ENCODE measurements at regions of chr4 and their contacts with region 1.

Region 1: GRCh38 chr4:88964450-88964849 is 92.5 kb downstream of the FAM13A start:
- DNase-seq: no peak
- ATAC-seq: peak; percentile 24
- H3K4me3 ChIP-seq: no peak overlapping the region
- H3K4me3 Mint-ChIP-seq: no peak overlapping the region
- H3K27ac ChIP-seq: no peak overlapping the region
- H3K27ac Mint-ChIP-seq: no peak overlapping the region
- H3K4me1 ChIP-seq: peaks cover 0 to 8% of the 10 kb centered on the region in 2 donors
- H3K4me1 Mint-ChIP-seq: peaks cover 0 to 25% (median 16%) of the 10 kb centered on the region in 7 donors
- H3K27me3 ChIP-seq: no peaks in the 10 kb centered on the region
- H3K27me3 Mint-ChIP-seq: peaks cover 0 to 11% (median 0%) of the 10 kb centered on the region in 5 donors

Region 2: DNA sequence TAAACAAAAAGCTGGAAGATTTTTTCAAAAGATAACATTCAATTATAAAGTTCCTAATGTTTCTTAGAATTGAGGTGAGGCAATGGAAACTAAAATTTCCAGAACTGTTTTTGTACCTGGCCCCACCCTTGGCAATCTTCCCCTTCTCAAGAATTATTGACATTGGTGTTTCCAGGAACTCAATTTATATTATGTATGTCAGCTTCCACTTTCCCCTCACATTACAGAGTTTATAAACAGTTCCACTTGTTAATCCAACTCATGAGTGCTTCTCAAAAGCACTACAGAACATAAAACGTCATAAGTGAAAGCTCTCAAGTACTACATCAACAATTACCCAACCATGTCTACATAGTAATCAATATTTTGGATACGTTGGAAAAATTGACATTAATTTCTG is 14.8 kb before region 1 on chr4:
- CTCF ChIA-PET with region 1: no interaction called
- POLR2A ChIA-PET with region 1: no interaction called
- intact Hi-C with region 1: loop called in 1 of 2 experiments (anchors 2 kb)
- DNase-seq: no peak
- ATAC-seq: no peak
- H3K4me3 ChIP-seq: no peak overlapping the region
- H3K4me3 Mint-ChIP-seq: peak overlapping the region in 5 of 10 donors; percentile 3 to 61 (median 48)
- H3K27ac ChIP-seq: no peak overlapping the region
- H3K27ac Mint-ChIP-seq: peak overlapping the region in 5 of 9 donors; percentile 27 to 77 (median 74)
- H3K4me1 ChIP-seq: no peaks in the 10 kb centered on the region
- H3K4me1 Mint-ChIP-seq: peaks cover 6 to 71% (median 36%) of the 10 kb centered on the region in 7 donors
- H3K27me3 ChIP-seq: no peaks in the 10 kb centered on the region
- H3K27me3 Mint-ChIP-seq: no peaks in the 10 kb centered on the region